PC-9 (cell line): ENCODE measurements at regions of chr5 and their contacts with region 1.

Region 1: GRCh38 chr5:33180900-33181299 is 259.9 kb upstream of the TARS1 start:
- DNase-seq: peak in 1 of 2 experiments; percentile 29
- H3K4me3 ChIP-seq: no peak overlapping the region
- H3K27ac ChIP-seq: no peak overlapping the region
- H3K4me1 ChIP-seq: no peaks in the 10 kb centered on the region
- H3K27me3 ChIP-seq: no peaks in the 10 kb centered on the region
- CTCF ChIP-seq: peak; percentile 79

Region 2: GRCh38 chr5:32597041-32597629 is 583.8 kb before region 1 on chr5:
- CTCF ChIA-PET with region 1: interaction called, 4 read pairs
- POLR2A ChIA-PET with region 1: no interaction called
- intact Hi-C with region 1: loop called (anchors 5 kb)
- DNase-seq: no peak
- H3K4me3 ChIP-seq: no peak overlapping the region
- H3K27ac ChIP-seq: no peak overlapping the region
- H3K4me1 ChIP-seq: no peaks in the 10 kb centered on the region
- H3K27me3 ChIP-seq: no peaks in the 10 kb centered on the region
- CTCF ChIP-seq: no peak

Region 3: GRCh38 chr5:32722957-32723356 is 457.9 kb before region 1 on chr5:
- CTCF ChIA-PET with region 1: no interaction called
- POLR2A ChIA-PET with region 1: interaction called, 12 read pairs
- intact Hi-C with region 1: no loop called
- DNase-seq: no peak
- H3K4me3 ChIP-seq: no peak overlapping the region
- H3K27ac ChIP-seq: no peak overlapping the region
- H3K4me1 ChIP-seq: no peaks in the 10 kb centered on the region
- H3K27me3 ChIP-seq: peaks cover 36% of the 10 kb centered on the region
- CTCF ChIP-seq: no peak

Region 4: GRCh38 chr5:32916648-32917047 is 264.3 kb before region 1 on chr5:
- CTCF ChIA-PET with region 1: no interaction called
- POLR2A ChIA-PET with region 1: no interaction called
- intact Hi-C with region 1: loop called (anchors 1 kb)
- DNase-seq: peak in 1 of 2 experiments; percentile 65
- H3K4me3 ChIP-seq: no peak overlapping the region
- H3K27ac ChIP-seq: no peak overlapping the region
- H3K4me1 ChIP-seq: no peaks in the 10 kb centered on the region
- H3K27me3 ChIP-seq: no peaks in the 10 kb centered on the region
- CTCF ChIP-seq: peak; percentile 82

Region 5: DNA sequence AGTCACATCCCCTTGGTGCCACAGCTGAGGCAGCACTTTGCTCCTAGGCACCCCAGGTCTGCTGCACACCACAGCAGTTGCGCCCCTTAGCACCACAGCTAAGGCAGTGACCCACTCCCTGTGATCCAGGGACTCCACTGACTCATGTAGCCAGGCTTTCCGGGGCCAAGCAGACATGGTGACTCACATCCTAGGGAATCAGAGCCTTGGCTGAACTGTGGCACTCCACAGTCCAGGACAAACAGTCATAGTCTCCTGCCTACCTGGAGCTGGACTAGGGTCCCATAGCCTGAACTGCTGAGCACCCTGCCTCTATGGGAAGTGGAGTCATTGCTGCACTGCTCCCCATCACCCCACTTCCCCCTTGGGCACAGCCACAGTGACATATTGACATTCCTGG is 131.1 kb before region 1 on chr5:
- CTCF ChIA-PET with region 1: no interaction called
- POLR2A ChIA-PET with region 1: no interaction called
- intact Hi-C with region 1: loop called (anchors 1 kb)
- DNase-seq: peak; percentile 58 to 86
- H3K4me3 ChIP-seq: no peak overlapping the region
- H3K27ac ChIP-seq: peak overlapping the region; percentile 41
- H3K4me1 ChIP-seq: peaks cover 32% of the 10 kb centered on the region
- H3K27me3 ChIP-seq: no peaks in the 10 kb centered on the region
- CTCF ChIP-seq: no peak

Region 6: DNA sequence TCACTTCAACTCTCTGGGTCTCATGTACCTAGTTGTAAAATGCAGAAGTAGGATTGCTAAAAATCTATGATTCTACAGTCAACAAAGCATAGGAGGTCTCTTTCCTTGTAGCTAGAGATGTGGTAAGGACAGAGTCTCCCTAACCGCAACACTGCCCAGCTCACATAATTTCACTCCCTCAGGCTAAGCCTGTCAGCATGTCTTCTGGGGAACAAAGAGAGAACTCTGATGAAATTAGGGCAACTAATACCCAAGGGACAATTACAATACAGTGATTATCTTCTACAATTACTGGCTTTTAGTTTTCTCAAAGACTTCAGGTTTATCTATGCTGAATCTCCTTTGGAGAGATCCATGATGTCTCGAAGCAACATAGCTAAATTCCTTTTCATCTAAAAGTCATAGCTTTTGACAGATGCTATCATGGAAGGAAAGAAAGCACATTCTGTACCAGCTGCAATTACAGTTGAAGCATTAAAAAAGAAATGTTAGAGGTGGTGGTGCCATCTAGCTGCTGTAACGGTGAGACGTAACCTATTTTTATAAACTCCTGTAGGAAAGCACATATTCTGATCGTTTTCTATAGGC is 118.8 kb after region 1 on chr5:
- CTCF ChIA-PET with region 1: no interaction called
- POLR2A ChIA-PET with region 1: no interaction called
- intact Hi-C with region 1: loop called (anchors 1 kb)
- DNase-seq: peak in 1 of 2 experiments; percentile 37
- H3K4me3 ChIP-seq: no peak overlapping the region
- H3K27ac ChIP-seq: no peak overlapping the region
- H3K4me1 ChIP-seq: no peaks in the 10 kb centered on the region; the same call in 1 of the 2 replicates
- H3K27me3 ChIP-seq: no peaks in the 10 kb centered on the region
- CTCF ChIP-seq: peak; percentile 77